Activated B cell treated with CpG ODN at 0.5 μM for 24 hours (primary cell): ENCODE measurements at regions of chr19 and their contacts with region 1.

Region 1: DNA sequence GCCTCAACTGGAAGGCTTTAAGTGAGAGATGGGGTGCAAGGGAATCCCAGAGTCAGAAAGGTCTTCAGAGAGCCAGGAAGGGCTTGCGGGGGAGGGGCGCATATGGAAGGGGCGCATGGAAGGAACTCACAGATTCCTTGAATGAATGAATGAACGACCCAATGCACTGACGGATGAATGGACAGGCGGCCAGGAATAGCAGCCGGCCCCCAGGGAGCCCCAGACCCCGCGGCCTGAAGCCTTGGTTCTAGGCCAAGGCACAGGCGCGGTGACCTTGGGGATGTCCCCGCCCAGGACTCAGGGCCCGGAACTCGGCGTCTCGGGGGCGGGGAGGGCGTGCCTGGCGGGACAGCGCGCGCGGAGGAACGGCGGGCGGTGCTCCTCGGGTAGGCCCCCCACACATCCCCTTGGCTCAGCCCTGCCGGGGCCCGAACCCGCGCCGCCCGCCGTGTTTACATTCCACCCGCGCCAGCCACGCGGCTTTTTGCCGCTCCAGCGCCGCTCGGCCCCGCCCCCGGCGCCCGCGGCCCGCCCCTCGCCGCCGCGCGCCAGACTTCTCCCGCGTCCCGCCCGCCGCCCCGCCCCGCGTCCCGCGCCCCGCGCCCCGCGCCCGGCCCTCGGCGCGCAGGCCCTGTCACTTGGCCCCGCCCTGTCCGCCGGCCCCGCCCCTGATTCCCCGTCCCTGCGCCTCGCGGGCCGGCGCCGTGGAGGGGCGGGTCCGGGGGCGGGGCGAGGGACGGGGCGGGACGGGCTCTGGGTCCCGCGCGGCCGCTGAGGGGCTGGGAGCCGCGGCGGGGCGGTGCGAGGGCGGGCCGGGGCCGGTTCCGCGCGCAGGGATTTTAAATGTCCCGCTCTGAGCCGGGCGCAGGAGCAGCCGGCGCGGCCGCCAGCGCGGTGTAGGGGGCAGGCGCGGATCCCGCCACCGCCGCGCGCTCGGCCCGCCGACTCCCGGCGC is at the start of gene CCNE1:
- DNase-seq: peak; percentile 95
- ATAC-seq: peak; percentile 94
- H3K4me3 Mint-ChIP-seq: peak within 1 kb of the TSS; percentile 85
- H3K27ac Mint-ChIP-seq: peak within 1 kb of the TSS; percentile 77
- H3K4me1 Mint-ChIP-seq: peaks cover 18% of the 10 kb centered on the region
- H3K27me3 Mint-ChIP-seq: no peaks in the 10 kb centered on the region
- CTCF ChIP-seq: no peak
- total RNA-seq, gene CCNE1: 3.4 and 4.1 TPM in 2 replicates

Region 2: DNA sequence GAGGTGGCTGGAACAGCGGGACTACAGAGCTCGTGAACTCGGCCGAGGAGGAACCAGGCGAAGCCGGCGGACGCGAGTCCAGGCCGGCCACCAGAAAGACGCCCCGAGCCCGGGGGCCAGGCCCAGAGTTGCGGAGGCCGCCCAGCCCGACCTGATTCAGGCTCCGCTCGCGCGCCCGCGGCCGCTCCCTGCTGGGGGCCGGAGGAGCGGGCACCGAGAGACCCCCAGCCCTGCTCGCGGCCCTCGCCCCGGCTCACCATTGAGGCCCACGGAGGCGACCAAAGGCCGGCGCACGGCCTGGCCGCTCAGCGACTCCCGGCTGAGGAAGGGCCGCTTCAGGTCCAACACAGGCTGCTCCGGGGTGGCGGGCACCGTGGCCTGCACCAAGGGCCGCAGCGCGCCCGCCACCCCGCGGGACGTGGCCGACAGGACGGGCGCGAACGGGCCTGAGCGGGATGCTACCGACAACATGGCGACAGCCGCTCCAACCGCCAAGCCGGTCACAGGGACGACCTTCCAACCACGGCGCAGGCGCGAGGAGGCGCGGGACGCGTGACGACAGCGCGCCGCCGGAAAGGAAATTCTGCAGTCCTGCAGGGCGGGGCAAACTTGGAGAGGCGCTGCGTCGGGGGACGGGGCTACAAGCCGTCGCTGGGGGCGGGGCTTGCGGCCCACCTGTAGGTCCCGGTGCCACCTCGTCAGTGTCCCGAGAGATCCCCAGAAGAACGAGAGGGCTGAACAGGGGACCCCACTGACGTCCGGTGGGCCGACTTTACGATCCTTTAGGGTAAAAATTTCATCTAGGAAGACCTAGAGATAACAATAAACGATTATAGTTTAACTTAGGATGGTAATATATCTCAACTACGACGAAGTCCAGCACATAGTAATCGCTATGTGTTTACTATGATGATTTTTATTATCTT is 598.5 kb before region 1 on chr19 and contains the start of gene UQCRFS1:
- CTCF ChIA-PET with region 1: no interaction called
- POLR2A ChIA-PET with region 1: interaction called, 3 read pairs
- intact Hi-C with region 1: loop called (anchors 1 kb)
- DNase-seq: peak; percentile 92
- ATAC-seq: peak; percentile 96
- H3K4me3 Mint-ChIP-seq: peak within 1 kb of the TSS; percentile 92
- H3K27ac Mint-ChIP-seq: peak within 1 kb of the TSS; percentile 88
- H3K4me1 Mint-ChIP-seq: peaks cover 38% of the 10 kb centered on the region
- H3K27me3 Mint-ChIP-seq: peaks cover 9% of the 10 kb centered on the region
- CTCF ChIP-seq: no peak
- total RNA-seq, gene UQCRFS1: 22.9 and 24.4 TPM in 2 replicates

Region 3: DNA sequence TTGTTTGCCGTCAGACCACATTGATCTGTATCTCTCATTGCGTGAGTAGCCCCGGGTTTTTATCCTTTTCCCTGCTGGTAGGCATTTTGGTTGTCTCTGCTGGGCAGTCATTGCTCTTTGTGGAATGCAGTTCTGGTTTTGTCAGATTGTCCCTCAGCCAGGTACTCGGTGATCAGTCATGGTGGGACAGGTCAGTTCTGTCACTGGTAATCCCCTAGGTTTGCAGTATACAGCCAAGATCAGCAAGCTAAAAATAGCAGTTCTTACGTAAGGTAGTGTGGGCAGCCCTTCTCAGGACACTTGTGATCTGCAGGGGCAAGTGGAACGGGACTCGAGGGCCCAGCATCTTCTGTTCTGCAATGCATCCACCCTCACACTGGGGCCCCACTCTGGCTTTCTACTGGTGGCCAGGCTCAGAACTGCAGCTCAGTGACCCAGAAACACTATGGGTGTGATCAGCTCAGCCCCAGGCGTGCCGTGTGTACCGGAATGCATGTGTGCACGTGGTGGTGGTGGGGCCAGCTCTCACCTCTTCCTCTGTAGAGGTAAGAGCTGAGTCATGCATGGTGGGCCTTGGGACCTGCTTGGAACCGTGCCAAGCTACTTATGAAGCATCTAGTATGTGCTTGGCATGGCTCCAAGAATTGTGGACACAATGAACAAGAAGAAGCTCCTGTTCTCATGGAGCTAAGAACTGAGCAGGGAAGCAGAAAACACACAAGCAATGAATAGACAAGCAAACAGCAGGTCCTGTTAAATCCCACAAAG is 139.8 kb before region 1 on chr19:
- CTCF ChIA-PET with region 1: no interaction called
- POLR2A ChIA-PET with region 1: no interaction called
- intact Hi-C with region 1: loop called (anchors 1 kb)
- DNase-seq: peak; percentile 42
- ATAC-seq: peak; percentile 79
- H3K4me3 Mint-ChIP-seq: peak overlapping the region; percentile 46
- H3K27ac Mint-ChIP-seq: peak overlapping the region; percentile 93
- H3K4me1 Mint-ChIP-seq: peaks cover 58% of the 10 kb centered on the region
- H3K27me3 Mint-ChIP-seq: no peaks in the 10 kb centered on the region
- CTCF ChIP-seq: no peak

Region 4: DNA sequence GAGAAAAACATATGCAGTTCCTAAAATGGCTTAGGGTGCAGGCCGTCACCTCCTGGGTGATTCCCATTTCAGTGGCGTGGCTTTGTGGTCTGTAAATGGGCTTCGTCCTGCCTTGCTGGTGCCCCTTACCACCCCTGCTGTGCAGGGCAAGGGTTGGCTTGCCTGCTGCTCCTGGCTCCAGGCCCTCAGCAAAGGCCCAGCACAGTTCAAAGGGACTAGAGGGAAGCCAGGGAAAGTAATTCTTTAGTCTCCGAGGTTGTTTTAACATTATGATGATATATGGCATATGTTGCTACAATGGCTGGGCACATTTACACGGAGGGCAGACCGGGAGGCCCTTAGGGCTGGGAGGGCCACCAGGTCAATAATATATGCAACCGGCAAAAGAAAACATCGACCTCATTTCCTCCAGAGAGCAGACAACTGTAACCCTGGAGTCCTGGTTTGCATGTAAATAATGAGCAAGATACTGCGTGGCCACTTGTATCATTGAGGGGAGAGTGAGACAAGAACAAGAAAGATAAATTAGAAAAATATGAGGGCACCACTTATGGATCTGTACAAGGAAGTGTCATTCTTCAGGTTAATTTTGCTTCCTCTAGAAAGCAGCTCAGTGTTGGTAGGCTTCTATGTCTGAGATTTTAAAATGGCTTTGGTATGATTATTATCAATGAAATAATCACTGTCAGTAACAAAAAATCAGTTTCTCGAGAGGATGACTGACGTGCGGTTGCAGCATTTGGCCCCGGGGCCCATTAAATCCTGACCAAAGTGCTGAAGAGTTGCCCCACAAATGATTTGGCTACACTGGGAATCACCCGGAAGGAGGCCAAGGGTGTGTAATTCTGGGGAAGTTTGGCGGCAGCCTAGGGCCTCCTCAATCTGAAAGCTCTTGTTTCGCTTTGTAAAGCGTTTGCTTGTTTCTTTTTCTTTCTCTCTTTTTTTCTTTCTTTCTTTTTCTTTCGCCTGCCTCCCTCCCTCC is 97.9 kb after region 1 on chr19:
- CTCF ChIA-PET with region 1: no interaction called
- POLR2A ChIA-PET with region 1: no interaction called
- intact Hi-C with region 1: no loop called
- DNase-seq: no peak
- ATAC-seq: no peak
- H3K4me3 Mint-ChIP-seq: no peak overlapping the region
- H3K27ac Mint-ChIP-seq: no peak overlapping the region
- H3K4me1 Mint-ChIP-seq: no peaks in the 10 kb centered on the region
- H3K27me3 Mint-ChIP-seq: peaks cover 3% of the 10 kb centered on the region
- CTCF ChIP-seq: no peak